Caco-2 (cell line): ENCODE measurements at regions of chr1 and their contacts with region 1.

Region 1: DNA sequence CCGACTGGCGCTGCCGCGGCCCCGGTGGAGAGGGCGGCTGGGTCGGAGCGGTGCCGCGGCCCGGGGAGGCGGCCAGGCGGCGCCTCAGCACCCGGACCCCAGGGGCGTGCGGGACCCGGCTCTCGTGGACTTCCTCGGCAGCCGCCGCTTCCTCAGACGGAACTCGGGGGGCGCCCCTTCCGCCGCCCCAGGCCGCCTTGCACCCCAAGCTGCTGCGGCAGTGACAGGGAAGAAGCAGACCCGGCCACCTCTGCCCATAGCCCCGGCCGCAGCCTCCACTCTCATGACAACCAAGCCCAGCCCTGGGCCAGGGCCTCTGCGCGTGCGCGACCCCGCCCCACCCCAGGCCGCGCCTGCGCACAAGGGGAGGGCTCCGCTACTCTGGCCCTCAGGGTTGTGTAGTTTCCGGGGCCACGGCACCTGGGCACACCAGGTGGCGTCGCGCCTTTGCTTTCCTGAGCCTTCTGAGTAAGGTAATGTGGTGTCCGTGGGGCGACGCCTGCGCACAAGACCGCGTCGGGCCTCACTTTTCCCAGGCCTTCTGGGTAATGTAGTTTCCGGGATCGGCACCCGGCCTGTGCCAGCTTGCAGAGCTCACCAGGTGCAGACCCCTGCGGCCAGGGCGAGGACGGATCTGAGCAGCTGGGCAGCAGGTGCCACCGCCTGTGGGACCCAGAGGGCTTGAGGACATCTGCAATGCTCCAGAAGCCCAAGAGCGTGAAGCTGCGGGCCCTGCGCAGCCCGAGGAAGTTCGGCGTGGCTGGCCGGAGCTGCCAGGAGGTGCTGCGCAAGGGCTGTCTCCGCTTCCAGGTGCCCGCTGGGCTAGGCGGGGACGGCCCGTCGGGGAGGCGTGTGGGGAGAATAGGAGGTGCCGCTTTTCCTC is at the starts of genes CEP104 and DFFB:
- DNase-seq: peak; percentile 96 to 97
- H3K4me3 ChIP-seq: peak within 1 kb of the TSS; percentile 62
- H3K4me3 Mint-ChIP-seq: peak within 1 kb of the TSS; percentile 98
- H3K27ac Mint-ChIP-seq: peak within 1 kb of the TSS; percentile 87
- H3K4me1 ChIP-seq: no peaks in the 10 kb centered on the region
- H3K4me1 Mint-ChIP-seq: no peaks in the 10 kb centered on the region
- H3K27me3 ChIP-seq: no peaks in the 10 kb centered on the region
- H3K27me3 Mint-ChIP-seq: no peaks in the 10 kb centered on the region
- CTCF ChIP-seq: peak in 1 of 2 experiments; percentile 52
- total RNA-seq, gene CEP104: 35.6 and 36.0 TPM in 2 replicates
- total RNA-seq, gene DFFB: 7.1 and 7.7 TPM in 2 replicates

Region 2: DNA sequence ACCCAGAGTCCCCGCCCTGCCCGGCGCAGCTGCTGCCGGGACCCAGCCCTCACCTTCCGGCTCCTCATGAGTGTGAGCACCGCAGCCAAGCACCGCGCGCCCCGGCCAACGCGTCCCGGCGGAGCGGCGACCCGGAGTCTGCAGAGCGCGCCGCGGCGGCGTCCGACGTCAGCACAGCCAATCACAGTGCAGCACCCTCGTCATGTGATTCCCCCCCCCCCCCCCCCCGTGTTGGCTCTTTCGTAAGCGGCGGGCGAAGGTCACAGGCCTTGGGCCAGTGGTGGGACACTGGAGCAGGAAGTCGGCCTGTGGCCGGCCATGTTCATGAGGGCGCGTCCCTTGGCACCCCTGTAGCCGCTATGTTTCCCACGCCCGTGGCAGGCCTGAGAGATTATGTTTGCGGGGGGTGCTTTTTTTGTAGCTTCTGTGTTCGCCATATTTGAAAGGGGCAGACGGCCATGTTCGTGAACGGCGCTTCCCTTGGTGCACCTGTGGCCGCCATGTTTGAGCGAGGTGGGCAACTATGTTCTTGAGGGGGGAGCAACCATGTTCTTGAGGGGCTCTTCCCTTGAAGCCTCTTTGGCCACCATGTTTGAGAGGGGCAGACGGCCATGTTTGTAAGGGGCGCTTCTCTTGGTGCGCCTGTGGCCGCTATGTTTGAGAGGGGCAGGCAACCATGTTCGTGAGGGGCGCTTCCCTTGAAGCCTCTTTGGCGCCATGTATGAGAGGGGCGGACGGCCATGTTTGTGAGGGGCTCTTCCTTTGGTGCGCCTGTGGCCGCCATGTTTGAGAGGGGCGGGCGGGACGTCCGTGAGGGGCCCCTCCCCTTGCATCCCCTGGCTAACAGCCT is 43.2 kb after region 1 on chr1 and contains the start of gene C1orf174:
- CTCF ChIA-PET with region 1: interaction called, 12 read pairs
- POLR2A ChIA-PET with region 1: no interaction called
- intact Hi-C with region 1: loop called (anchors 1 kb)
- DNase-seq: peak; percentile 89 to 94
- H3K4me3 ChIP-seq: peak within 1 kb of the TSS; percentile 74
- H3K4me3 Mint-ChIP-seq: peak within 1 kb of the TSS; percentile 81
- H3K27ac Mint-ChIP-seq: peak within 1 kb of the TSS; percentile 95
- H3K4me1 ChIP-seq: no peaks in the 10 kb centered on the region; the same call in 1 of the 2 replicates
- H3K4me1 Mint-ChIP-seq: peaks cover 7% of the 10 kb centered on the region
- H3K27me3 ChIP-seq: no peaks in the 10 kb centered on the region
- H3K27me3 Mint-ChIP-seq: no peaks in the 10 kb centered on the region
- CTCF ChIP-seq: no peak
- total RNA-seq, gene C1orf174: 19.0 and 19.2 TPM in 2 replicates

Region 3: GRCh38 chr1:4137621-4138415 is 280.7 kb after region 1 on chr1:
- CTCF ChIA-PET with region 1: no interaction called
- POLR2A ChIA-PET with region 1: no interaction called
- intact Hi-C with region 1: no loop called
- DNase-seq: no peak
- H3K4me3 ChIP-seq: no peak overlapping the region
- H3K4me3 Mint-ChIP-seq: no peak overlapping the region
- H3K27ac Mint-ChIP-seq: no peak overlapping the region
- H3K4me1 ChIP-seq: no peaks in the 10 kb centered on the region
- H3K4me1 Mint-ChIP-seq: no peaks in the 10 kb centered on the region
- H3K27me3 ChIP-seq: no peaks in the 10 kb centered on the region
- H3K27me3 Mint-ChIP-seq: no peaks in the 10 kb centered on the region
- CTCF ChIP-seq: no peak